ENCODE measurements at regions of chr3 and their contacts with region 1.

Region 1: DNA sequence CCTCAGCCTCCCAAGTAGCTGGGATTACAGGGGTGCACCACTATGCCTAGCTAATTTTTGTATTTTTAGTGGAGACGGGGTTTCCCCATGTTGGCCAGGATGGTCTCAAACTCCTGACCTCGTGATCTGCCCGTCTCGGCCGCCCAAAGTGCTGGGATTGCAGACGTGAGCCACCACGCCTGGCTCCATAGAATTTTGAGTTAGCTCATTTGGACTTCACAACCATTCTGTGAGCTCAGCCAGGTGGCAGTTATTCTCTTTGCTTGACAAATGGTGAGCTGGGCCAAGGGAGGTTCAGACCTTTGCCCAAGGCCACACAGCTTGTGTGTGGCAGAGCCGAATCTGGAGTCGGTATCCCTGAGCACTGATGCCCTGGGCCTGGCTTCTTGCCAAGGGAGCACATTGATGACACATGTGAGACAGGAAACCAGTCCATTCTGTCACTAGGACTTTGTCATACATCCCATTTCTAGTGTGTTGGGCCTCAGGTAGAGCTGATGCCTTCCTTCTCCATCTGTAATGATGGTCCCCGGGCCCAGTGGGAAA is 17.6 kb downstream of the PODXL2 start:
- DNase-seq: no peak
- H3K4me3 ChIP-seq: no peak overlapping the region
- CTCF ChIP-seq: no peak

Region 2: GRCh38 chr3:127226946-127227842 is 419.4 kb before region 1 on chr3:
- CTCF ChIA-PET with region 1: no interaction called
- POLR2A ChIA-PET with region 1: no interaction called
- DNase-seq: no peak
- H3K4me3 ChIP-seq: no peak overlapping the region
- CTCF ChIP-seq: no peak

Region 3: DNA sequence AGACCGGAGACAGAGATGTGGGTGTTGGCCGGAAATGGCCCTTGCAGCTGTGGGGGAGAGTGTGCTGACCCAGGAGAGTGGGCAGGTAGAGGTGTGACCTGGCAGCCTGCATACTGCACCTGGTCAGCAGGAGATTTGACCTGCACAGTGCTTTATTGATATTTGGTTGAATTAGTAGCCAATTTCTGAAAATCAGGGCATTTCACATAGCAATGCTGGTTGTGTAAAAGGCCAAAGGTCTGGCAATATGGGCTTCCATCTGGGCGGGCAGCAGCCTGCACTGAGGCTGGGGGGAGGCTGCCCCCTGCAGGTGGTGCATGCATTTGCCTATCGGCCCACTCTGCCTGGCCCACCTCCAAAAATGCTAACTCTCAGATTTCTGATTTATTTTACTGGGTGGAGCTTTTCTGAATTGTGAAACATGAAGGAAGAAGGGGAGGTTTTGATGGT is 185.2 kb after region 1 on chr3:
- CTCF ChIA-PET with region 1: interaction called, 24 read pairs
- POLR2A ChIA-PET with region 1: no interaction called
- DNase-seq: no peak
- H3K4me3 ChIP-seq: no peak overlapping the region
- CTCF ChIP-seq: peak; percentile 68

Measured in AG04449 (cell line).